Thyroid gland (tissue), 4 donors: ENCODE measurements at regions of chr1 and their contacts with region 1.

Region 1: GRCh38 chr1:35564037-35564883 is 6.7 kb downstream of the NCDN start:
- DNase-seq: peak; percentile 77 to 86
- H3K4me3 ChIP-seq: no peak overlapping the region
- H3K27ac ChIP-seq: no peak overlapping the region
- H3K4me1 ChIP-seq: peaks cover 0 to 10% of the 10 kb centered on the region in 2 donors
- H3K27me3 ChIP-seq: no peaks in the 10 kb centered on the region
- CTCF ChIP-seq: peak; percentile 32 to 77 (median 60)
- POLR2A ChIP-seq: no peak

Region 2: DNA sequence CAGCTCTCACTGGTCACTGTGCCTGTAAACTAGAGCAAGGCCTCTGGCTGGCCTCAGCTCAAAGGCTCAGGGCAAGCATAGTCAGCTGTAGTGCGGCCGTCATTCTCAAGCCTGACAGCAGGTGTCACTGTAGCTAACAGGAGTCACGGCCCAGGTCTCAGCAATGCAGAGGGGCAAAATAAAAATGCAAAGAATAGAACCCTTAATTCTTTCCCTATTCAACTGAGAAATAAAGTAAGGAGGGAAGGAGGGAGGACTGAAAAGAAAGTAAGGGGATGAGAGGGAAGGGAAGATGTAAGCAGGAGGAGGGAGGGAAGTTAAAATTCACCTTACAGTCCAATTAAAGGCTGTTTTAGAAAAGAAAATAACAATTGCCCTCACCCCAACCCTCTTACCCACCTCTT is 113.1 kb before region 1 on chr1:
- intact Hi-C with region 1: loop called (anchors 2 kb)
- DNase-seq: peak; percentile 83 to 84
- H3K4me3 ChIP-seq: no peak overlapping the region
- H3K27ac ChIP-seq: no peak overlapping the region
- H3K4me1 ChIP-seq: peaks cover 22 to 58% of the 10 kb centered on the region in 2 donors
- H3K27me3 ChIP-seq: no peaks in the 10 kb centered on the region
- CTCF ChIP-seq: peak; percentile 32 to 91 (median 84)
- POLR2A ChIP-seq: no peak

Region 3: DNA sequence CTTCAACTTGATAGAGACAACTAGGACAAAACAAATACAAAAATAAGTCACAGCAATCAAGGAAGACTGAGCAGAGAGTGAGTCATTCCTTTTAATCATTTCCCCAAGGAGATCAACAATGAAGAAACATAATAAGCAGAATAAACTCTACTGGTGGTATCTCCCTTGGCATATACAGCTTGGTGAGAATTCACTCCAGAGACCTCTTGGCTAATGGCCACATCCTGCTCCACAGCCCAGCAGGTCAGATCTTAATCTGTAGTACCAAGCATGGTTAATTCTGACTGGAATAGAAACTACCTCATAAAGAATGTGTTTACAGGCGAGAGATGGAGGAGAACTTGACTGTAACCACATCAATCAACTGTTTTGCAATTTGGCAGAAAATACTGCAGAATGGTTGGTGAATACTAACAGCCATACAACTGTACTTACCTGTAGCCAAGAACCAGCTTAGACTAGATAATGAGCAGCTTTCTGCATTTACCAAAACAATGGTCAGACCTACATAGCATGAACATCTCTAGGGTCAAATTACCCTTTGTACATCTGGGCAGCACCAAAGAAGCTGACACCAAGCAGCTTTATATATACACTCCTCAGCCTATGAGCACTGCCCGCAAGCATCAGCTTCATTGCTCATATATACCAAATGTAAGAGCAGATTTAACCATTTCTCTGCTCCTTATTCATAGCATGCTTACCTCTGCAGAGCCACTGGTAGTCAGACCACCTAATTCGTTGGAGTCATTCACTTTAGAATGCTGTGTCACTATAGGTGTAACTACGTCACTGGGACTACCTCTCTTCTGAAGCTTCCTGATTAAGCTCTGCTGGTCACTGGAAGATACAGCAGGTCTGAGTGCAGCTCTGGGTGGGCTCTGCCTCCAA is 58.1 kb before region 1 on chr1:
- intact Hi-C with region 1: loop called (anchors 10 kb)
- DNase-seq: peak; percentile 69
- H3K4me3 ChIP-seq: no peak overlapping the region
- H3K27ac ChIP-seq: peak overlapping the region in 2 of 3 donors; percentile 55 to 57
- H3K4me1 ChIP-seq: peaks cover 34 to 52% of the 10 kb centered on the region in 2 donors
- H3K27me3 ChIP-seq: no peaks in the 10 kb centered on the region
- CTCF ChIP-seq: no peak
- POLR2A ChIP-seq: no peak

Region 4: GRCh38 chr1:35726450-35727433 is 162.5 kb after region 1 on chr1:
- intact Hi-C with region 1: loop called (anchors 5 kb)
- DNase-seq: peak; percentile 57 to 63
- H3K4me3 ChIP-seq: no peak overlapping the region
- H3K27ac ChIP-seq: no peak overlapping the region
- H3K4me1 ChIP-seq: peaks cover 0 to 6% of the 10 kb centered on the region in 2 donors
- H3K27me3 ChIP-seq: no peaks in the 10 kb centered on the region
- CTCF ChIP-seq: peak; percentile 68 to 87 (median 76)
- POLR2A ChIP-seq: no peak

Region 5: GRCh38 chr1:35769759-35770446 is 205.6 kb after region 1 on chr1 and contains the start of gene CLSPN:
- intact Hi-C with region 1: loop called (anchors 5 kb)
- DNase-seq: peak; percentile 96
- H3K4me3 ChIP-seq: peak within 1 kb of the TSS; percentile 65 to 79 (median 66)
- H3K27ac ChIP-seq: peak within 1 kb of the TSS in 2 of 3 donors; percentile 54 to 56
- H3K4me1 ChIP-seq: peaks cover 0 to 4% of the 10 kb centered on the region in 2 donors
- H3K27me3 ChIP-seq: no peaks in the 10 kb centered on the region
- CTCF ChIP-seq: no peak
- POLR2A ChIP-seq: peak in 1 of 2 donors; percentile 8
- total RNA-seq, gene CLSPN: 0.11 to 0.63 (median 0.27) TPM in 3 of 4 donors, not detected in the other